Panc1 (cell line): ENCODE measurements at regions of chr2 and their contacts with region 1.

Region 1: GRCh38 chr2:215920244-215921100 is 92.9 kb downstream of the MREG start:
- DNase-seq: peak; percentile 43
- ATAC-seq: peak; percentile 98
- H3K4me3 ChIP-seq: no peak overlapping the region
- H3K27ac ChIP-seq: no peak overlapping the region
- H3K4me1 ChIP-seq: no peaks in the 10 kb centered on the region
- H3K27me3 ChIP-seq: no peaks in the 10 kb centered on the region
- CTCF ChIP-seq: peak; percentile 86

Region 2: DNA sequence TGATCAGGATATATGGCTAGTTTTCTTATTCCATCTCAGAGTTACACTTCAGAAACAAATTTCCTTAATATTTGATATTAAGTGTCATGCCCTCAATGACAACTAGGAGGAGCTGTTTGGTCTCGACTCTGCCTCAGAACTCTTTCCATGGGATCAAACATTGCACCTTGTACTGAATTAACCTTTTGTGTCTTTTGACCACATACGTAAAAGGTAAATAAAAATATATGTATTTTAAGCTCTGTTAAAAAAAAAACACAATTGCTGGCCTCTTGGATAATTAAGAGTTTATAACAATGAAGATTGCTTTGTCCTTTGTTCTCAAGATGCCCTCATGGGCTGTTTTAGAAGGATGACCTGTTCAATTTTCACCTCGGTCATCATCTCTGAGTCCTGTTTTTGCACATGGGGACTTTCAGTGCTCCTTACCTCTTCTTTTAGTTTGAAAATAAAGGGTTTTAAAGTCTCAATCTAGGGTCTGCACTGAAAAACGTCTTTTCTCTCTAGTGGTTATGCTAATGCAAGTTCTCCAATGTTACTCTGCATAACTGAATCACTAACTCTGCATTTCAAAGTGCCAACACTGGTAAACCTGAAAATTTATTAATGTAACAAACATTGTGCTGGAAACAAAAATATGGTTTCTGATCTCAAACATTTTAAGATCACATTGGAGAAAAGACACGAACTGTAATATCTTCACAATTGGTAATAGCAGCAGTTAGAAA is 465.8 kb before region 1 on chr2:
- CTCF ChIA-PET with region 1: no interaction called
- POLR2A ChIA-PET with region 1: no interaction called
- in situ Hi-C with region 1: no loop called
- intact Hi-C with region 1: loop called (anchors 1 kb)
- DNase-seq: peak; percentile 18
- ATAC-seq: no peak
- H3K4me3 ChIP-seq: no peak overlapping the region
- H3K27ac ChIP-seq: no peak overlapping the region
- H3K4me1 ChIP-seq: no peaks in the 10 kb centered on the region
- H3K27me3 ChIP-seq: no peaks in the 10 kb centered on the region
- CTCF ChIP-seq: peak; percentile 77; the same call in 1 of the 2 replicates